ENCODE measurements at regions of chr1 and their contacts with region 1.

Region 1: DNA sequence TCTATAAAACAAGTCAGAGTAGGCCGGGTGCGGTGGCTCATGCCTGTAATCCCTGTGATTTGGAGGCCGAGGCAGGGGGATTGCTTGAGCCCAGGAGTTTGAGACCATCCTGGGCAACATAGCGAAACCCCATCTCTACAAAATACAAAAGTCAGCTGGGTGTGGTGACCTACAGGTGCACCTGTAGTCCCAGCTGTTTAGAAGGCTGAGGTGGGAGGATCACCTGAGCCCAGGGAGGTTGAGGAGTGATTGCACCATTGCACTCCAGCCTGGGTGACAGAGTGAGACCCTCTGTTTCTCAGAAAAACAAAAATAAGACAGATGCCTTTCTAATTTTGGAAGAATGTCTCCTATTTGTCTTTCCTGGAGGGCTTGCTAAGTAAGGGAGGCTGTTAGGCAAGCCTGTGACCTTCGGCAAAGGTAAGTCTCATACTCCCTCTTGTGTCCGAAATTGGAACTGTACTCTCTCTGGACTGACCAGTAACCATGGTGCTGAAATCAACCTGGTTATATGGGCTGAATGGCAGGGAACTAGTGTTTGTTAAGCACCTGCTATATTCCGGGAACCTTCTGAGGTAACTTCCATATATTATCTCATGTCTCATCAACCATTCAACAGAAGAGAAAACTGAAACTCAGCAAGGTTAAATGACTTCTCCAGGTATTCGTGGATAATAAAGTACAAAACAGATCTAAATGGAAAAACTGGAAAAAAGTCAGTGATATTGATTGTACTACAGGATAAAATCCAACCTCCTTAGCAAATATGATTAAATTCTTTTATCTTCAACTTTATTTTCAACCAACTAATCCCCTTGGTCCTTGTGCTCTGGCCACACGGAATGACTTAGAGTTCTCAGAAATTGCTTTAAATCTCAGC is 11.8 kb upstream of the RAB3B start:
- DNase-seq: no peak
- H3K4me3 ChIP-seq: no peak overlapping the region
- H3K27ac ChIP-seq: no peak overlapping the region
- H3K4me1 ChIP-seq: no peaks in the 10 kb centered on the region
- H3K27me3 ChIP-seq: peaks cover 59% of the 10 kb centered on the region
- CTCF ChIP-seq: peak; percentile 92

Region 2: GRCh38 chr1:51897699-51898031 is 104.6 kb before region 1 on chr1:
- intact Hi-C with region 1: loop called (anchors 5 kb)
- DNase-seq: no peak
- H3K4me3 ChIP-seq: no peak overlapping the region
- H3K27ac ChIP-seq: no peak overlapping the region
- H3K4me1 ChIP-seq: no peaks in the 10 kb centered on the region
- H3K27me3 ChIP-seq: peaks cover 100% of the 10 kb centered on the region
- CTCF ChIP-seq: no peak

Region 3: DNA sequence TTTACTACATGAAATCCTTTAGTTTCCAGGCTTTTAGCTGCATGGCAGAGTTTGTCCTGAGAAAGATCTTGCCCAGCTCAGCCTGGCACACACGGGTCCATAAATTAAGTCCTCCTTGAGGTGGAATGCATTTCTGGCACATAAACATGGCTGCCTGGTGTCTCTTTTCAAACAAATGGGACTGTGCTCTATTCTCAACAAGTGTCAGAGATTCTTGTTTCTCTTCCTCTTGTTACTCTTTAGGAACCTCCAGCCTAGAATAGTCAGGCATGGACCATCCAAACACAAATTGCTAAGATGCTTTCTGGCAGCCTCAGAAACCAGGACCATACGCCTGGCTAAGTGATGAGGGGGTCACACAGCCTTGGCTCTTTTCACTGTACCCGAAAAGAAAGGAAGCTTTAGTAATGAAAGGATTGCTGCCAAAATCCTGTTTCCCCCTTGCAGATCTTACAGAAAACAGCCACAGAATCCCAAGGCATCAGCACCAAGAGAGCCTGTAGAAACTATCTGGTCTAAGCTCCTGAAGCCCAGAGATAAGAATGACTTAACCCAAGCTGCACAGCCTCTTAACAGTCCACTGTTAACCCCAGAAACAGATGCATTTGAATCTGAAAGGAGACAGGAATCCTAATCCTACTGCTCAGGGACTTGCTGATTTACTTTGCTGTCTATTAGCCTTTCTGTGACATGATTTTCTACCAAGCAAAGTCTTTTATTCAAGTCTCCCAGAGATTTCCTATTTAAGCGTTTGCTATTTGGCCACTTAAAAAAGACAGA is 91.9 kb before region 1 on chr1:
- intact Hi-C with region 1: no loop called
- DNase-seq: no peak
- H3K4me3 ChIP-seq: no peak overlapping the region
- H3K27ac ChIP-seq: no peak overlapping the region
- H3K4me1 ChIP-seq: no peaks in the 10 kb centered on the region
- H3K27me3 ChIP-seq: peaks cover 82% of the 10 kb centered on the region
- CTCF ChIP-seq: no peak